PC-3 (cell line): ENCODE measurements at regions of chr11 and their contacts with region 1.

Region 1: GRCh38 chr11:96136613-96137298 is 206.2 kb downstream of the MAML2 start:
- DNase-seq: no peak
- ATAC-seq: no peak
- H3K4me3 ChIP-seq: no peak overlapping the region
- H3K27ac ChIP-seq: no peak overlapping the region
- H3K4me1 ChIP-seq: peaks cover 12% of the 10 kb centered on the region
- H3K27me3 ChIP-seq: no peaks in the 10 kb centered on the region
- CTCF ChIP-seq: no peak

Region 2: GRCh38 chr11:95964281-95964680 is 172.5 kb before region 1 on chr11:
- CTCF ChIA-PET with region 1: no interaction called
- POLR2A ChIA-PET with region 1: no interaction called
- intact Hi-C with region 1: no loop called
- DNase-seq: no peak
- ATAC-seq: no peak
- H3K4me3 ChIP-seq: no peak overlapping the region
- H3K27ac ChIP-seq: no peak overlapping the region
- H3K4me1 ChIP-seq: no peaks in the 10 kb centered on the region
- H3K27me3 ChIP-seq: no peaks in the 10 kb centered on the region
- CTCF ChIP-seq: no peak

Region 3: GRCh38 chr11:96155627-96156378 is 19.0 kb after region 1 on chr11:
- CTCF ChIA-PET with region 1: no interaction called
- POLR2A ChIA-PET with region 1: interaction called, 23 read pairs
- intact Hi-C with region 1: no loop called
- DNase-seq: peak; percentile 88
- ATAC-seq: peak; percentile 86
- H3K4me3 ChIP-seq: no peak overlapping the region
- H3K27ac ChIP-seq: peak overlapping the region; percentile 80
- H3K4me1 ChIP-seq: peaks cover 34% of the 10 kb centered on the region
- H3K27me3 ChIP-seq: no peaks in the 10 kb centered on the region
- CTCF ChIP-seq: no peak; the same call in 1 of the 2 replicates

Region 4: GRCh38 chr11:96180341-96180740 is 43.6 kb after region 1 on chr11:
- CTCF ChIA-PET with region 1: no interaction called
- POLR2A ChIA-PET with region 1: no interaction called
- intact Hi-C with region 1: no loop called
- DNase-seq: no peak
- ATAC-seq: no peak
- H3K4me3 ChIP-seq: no peak overlapping the region
- H3K27ac ChIP-seq: no peak overlapping the region
- H3K4me1 ChIP-seq: no peaks in the 10 kb centered on the region
- H3K27me3 ChIP-seq: no peaks in the 10 kb centered on the region
- CTCF ChIP-seq: no peak